OCI-LY7 (cell line): ENCODE measurements at regions of chr10 and their contacts with region 1.

Region 1: GRCh38 chr10:60237977-60238758 is 151.5 kb downstream of the ANK3 start:
- DNase-seq: peak; percentile 85
- H3K4me3 ChIP-seq: peak overlapping the region; percentile 63
- H3K27ac ChIP-seq: peak overlapping the region; percentile 99
- H3K4me1 ChIP-seq: peaks cover 61% of the 10 kb centered on the region
- CTCF ChIP-seq: peak; percentile 88

Region 2: DNA sequence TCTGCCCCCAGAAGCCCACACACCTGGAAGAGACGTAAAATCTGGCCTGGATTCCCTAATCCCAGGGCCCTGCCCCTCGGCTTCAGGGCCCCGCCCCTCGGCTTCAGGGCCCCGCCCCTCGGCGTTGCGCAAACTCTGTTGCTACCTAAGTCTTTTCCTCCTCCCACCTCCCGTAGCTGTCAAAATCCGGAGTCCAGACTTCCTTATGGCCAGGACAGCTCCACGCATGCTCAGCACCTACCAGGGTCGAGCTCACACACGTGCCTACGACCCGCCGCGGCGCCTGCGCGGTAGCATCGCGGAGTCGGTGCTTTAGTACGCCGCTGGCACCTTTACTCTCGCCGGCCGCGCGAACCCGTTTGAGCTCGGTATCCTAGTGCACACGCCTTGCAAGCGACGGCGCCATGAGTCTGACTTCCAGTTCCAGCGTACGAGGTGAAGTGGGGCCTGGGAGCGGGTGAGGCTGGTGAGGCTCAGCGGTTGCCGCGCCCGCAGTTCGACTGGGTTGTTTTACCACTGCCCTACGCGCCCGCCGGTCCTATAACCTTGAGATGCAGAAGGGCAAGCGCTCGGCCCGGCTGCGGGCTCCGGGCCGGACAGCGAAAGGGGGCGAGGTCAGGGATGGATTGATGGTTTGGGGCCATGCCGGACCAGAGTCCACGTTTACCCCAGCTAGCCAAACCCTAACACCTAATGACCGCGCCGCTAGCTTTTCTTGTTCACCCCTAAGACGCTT is 1969.1 kb before region 1 on chr10 and contains the start of gene CISD1:
- CTCF ChIA-PET with region 1: no interaction called
- POLR2A ChIA-PET with region 1: no interaction called
- intact Hi-C with region 1: loop called (anchors 10 kb)
- DNase-seq: peak; percentile 98
- H3K4me3 ChIP-seq: peak within 1 kb of the TSS; percentile 90
- H3K27ac ChIP-seq: peak within 1 kb of the TSS; percentile 82
- H3K4me1 ChIP-seq: peaks cover 24% of the 10 kb centered on the region
- CTCF ChIP-seq: no peak
- total RNA-seq, gene CISD1: 22.4 and 24.1 TPM in 2 replicates

Region 3: GRCh38 chr10:59830601-59831259 is 407.4 kb before region 1 on chr10:
- CTCF ChIA-PET with region 1: no interaction called
- POLR2A ChIA-PET with region 1: interaction called, 3 read pairs
- intact Hi-C with region 1: loop called (anchors 2 kb)
- DNase-seq: peak; percentile 53
- H3K4me3 ChIP-seq: no peak overlapping the region
- H3K27ac ChIP-seq: no peak overlapping the region
- H3K4me1 ChIP-seq: peaks cover 39% of the 10 kb centered on the region
- CTCF ChIP-seq: peak; percentile 89

Region 4: GRCh38 chr10:59970396-59971368 is 267.5 kb before region 1 on chr10:
- CTCF ChIA-PET with region 1: no interaction called
- POLR2A ChIA-PET with region 1: no interaction called
- intact Hi-C with region 1: no loop called
- DNase-seq: peak; percentile 27
- H3K4me3 ChIP-seq: no peak overlapping the region
- H3K27ac ChIP-seq: no peak overlapping the region
- H3K4me1 ChIP-seq: peaks cover 7% of the 10 kb centered on the region
- CTCF ChIP-seq: peak; percentile 60

Region 5: DNA sequence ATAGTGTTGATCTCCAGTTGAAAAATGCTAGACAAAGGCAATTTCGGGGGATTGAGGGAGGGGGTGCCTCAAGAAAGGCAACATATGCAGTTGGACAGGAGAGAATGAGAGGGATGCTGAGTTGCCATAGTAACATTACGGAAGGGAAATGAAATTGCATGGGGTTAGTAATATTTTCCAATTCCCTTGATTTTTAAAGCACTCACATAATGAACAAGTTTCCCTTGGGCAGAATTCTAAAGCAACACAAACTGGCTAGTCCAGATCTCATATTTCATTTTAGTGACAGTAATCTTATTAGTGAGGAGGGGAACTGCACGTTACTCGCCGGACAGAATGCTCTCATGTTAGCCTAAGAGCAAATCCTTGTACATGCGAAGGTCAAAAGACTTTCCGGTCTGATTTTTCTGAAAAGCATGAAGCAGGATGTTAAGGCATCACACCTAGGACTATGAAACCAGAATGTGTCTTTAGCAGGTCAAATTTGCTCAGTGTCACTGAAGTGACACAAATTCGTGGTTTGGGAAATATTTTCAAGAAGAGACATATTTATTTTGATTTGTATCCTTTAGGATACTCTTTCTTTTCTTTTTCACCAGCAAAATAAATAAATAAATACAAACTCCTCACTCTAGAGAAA is 14.0 kb before region 1 on chr10:
- CTCF ChIA-PET with region 1: interaction called, 3 read pairs
- POLR2A ChIA-PET with region 1: interaction called, 13 read pairs
- intact Hi-C with region 1: no loop called
- DNase-seq: no peak
- H3K4me3 ChIP-seq: no peak overlapping the region
- H3K27ac ChIP-seq: no peak overlapping the region
- H3K4me1 ChIP-seq: peaks cover 8% of the 10 kb centered on the region
- CTCF ChIP-seq: no peak

Region 6: DNA sequence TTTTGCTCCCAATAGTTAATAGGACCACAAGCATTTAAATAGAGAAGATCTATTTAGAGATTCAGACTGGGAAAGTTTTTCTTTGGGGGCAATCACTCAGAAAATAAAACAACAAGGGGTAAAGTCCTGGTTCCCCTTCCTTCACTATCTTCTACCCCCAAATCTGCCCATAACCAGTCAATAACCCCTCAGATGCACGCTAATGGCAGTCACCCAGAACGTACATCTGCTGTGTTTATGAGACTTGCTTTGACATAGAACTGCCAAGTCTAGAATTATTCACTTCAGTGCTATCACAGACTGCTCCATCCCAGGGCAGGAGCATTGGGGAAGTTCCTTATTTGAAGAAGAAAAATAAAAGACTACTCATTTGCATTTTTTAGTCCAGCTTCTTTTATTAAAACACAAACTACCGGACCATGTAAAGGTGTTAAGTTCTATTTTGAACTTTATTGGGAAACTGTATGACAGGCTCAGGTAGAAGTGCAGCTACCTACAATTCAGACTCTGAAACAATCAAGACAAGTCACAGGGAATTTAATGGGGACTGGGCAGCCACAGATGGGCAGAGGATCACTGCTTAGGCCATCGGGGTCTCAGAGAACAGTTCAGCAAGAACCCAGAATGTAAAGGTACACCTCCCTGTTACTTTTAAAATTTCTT is 113.2 kb after region 1 on chr10:
- CTCF ChIA-PET with region 1: no interaction called
- POLR2A ChIA-PET with region 1: no interaction called
- intact Hi-C with region 1: loop called (anchors 2 kb)
- DNase-seq: peak; percentile 1
- H3K4me3 ChIP-seq: no peak overlapping the region
- H3K27ac ChIP-seq: no peak overlapping the region
- H3K4me1 ChIP-seq: peaks cover 11% of the 10 kb centered on the region
- CTCF ChIP-seq: no peak

Region 7: GRCh38 chr10:60662917-60663614 is 424.9 kb after region 1 on chr10:
- CTCF ChIA-PET with region 1: no interaction called
- POLR2A ChIA-PET with region 1: no interaction called
- intact Hi-C with region 1: no loop called
- DNase-seq: no peak
- H3K4me3 ChIP-seq: no peak overlapping the region
- H3K27ac ChIP-seq: no peak overlapping the region
- H3K4me1 ChIP-seq: no peaks in the 10 kb centered on the region
- CTCF ChIP-seq: no peak

Region 8: GRCh38 chr10:60778214-60779029 is 540.3 kb after region 1 on chr10 and contains the start of gene CDK1:
- CTCF ChIA-PET with region 1: no interaction called
- POLR2A ChIA-PET with region 1: no interaction called
- intact Hi-C with region 1: loop called (anchors 2 kb)
- DNase-seq: peak; percentile 98
- H3K4me3 ChIP-seq: peak within 1 kb of the TSS; percentile 89
- H3K27ac ChIP-seq: peak within 1 kb of the TSS; percentile 84
- H3K4me1 ChIP-seq: peaks cover 35% of the 10 kb centered on the region
- CTCF ChIP-seq: no peak
- total RNA-seq, gene CDK1: 145 and 156 TPM in 2 replicates